ENCODE measurements at regions of chr10 and their contacts with region 1.

Region 1: DNA sequence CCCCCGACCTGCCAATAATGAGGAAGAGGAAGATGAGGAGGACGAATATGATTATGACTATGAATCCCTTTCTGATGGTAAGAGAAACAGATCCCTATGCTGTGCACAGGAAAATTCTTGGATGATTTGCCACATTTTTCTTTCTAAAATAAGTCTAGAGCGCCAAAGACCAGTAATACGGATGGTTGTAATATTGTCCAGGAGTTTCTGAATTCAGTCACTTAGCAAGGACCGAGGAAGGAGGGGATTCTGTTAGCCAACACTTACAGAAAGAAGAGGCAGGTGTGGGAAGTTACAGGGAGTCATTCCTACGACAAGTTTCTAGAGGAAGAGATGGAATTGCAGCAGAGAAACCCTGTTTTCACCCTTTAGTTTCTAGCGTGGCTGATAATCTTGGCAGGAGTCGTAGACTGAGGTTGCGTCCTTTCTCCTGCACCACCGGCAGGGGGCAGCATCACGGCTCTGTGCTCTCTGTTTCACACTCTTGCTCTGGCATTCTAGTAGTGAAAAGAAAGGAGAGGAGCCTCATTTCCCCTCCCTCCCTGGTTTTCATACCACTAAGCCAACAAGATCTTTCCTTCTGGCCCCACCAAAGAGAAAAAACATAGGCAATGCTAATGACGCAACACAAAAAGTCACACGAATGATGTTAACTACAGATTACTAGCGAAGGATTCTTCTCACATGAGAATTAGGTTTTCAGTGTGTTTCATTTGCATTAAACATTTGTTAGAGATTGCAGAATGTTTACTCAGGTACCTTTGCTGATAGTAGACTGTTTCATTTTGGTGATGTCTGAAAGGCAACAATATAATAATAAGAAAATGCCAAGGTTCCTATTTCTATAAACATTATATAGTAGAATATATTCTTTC is 82.7 kb downstream of the NOC3L start:
- DNase-seq: peak; percentile 37
- H3K4me3 ChIP-seq: no peak overlapping the region
- H3K27ac ChIP-seq: no peak overlapping the region
- H3K4me1 ChIP-seq: peaks cover 7% of the 10 kb centered on the region
- H3K27me3 ChIP-seq: no peaks in the 10 kb centered on the region
- CTCF ChIP-seq: peak; percentile 96

Region 2: GRCh38 chr10:94251098-94251497 is 29.0 kb before region 1 on chr10:
- CTCF ChIA-PET with region 1: no interaction called
- dilution Hi-C with region 1: no loop called
- in situ Hi-C with region 1: no loop called
- intact Hi-C with region 1: no loop called
- DNase-seq: no peak
- H3K4me3 ChIP-seq: no peak overlapping the region
- H3K27ac ChIP-seq: no peak overlapping the region
- H3K4me1 ChIP-seq: no peaks in the 10 kb centered on the region
- H3K27me3 ChIP-seq: no peaks in the 10 kb centered on the region
- CTCF ChIP-seq: no peak

Region 3: DNA sequence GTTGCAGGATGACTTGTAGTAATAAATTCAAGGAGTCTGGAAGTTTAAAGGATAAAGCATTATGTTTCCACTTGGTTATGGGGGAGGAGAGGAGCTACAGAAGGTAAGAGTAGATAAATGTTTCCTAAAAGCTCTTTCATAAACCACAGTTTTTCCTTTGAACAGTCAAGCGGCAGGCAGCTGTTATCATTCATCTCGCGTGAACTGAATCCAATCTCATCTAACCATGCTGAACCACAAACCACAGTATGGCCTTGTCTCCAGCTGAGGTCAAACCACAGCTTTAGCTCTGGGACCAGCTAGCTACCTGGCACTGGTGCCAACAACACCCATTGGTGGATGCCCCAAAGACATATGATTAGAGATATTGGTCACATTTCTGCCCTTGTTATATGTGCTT is 19.3 kb after region 1 on chr10:
- CTCF ChIA-PET with region 1: no interaction called
- dilution Hi-C with region 1: no loop called
- in situ Hi-C with region 1: no loop called
- intact Hi-C with region 1: no loop called
- DNase-seq: peak; percentile 71
- H3K4me3 ChIP-seq: no peak overlapping the region
- H3K27ac ChIP-seq: no peak overlapping the region
- H3K4me1 ChIP-seq: no peaks in the 10 kb centered on the region
- H3K27me3 ChIP-seq: peaks cover 12% of the 10 kb centered on the region
- CTCF ChIP-seq: no peak

Region 4: GRCh38 chr10:94320285-94320914 is 40.3 kb after region 1 on chr10:
- CTCF ChIA-PET with region 1: no interaction called
- dilution Hi-C with region 1: no loop called
- in situ Hi-C with region 1: no loop called
- intact Hi-C with region 1: loop called (anchors 1 kb)
- DNase-seq: peak; percentile 37
- H3K4me3 ChIP-seq: no peak overlapping the region
- H3K27ac ChIP-seq: no peak overlapping the region
- H3K4me1 ChIP-seq: no peaks in the 10 kb centered on the region
- H3K27me3 ChIP-seq: no peaks in the 10 kb centered on the region
- CTCF ChIP-seq: peak; percentile 73 to 79

Region 5: DNA sequence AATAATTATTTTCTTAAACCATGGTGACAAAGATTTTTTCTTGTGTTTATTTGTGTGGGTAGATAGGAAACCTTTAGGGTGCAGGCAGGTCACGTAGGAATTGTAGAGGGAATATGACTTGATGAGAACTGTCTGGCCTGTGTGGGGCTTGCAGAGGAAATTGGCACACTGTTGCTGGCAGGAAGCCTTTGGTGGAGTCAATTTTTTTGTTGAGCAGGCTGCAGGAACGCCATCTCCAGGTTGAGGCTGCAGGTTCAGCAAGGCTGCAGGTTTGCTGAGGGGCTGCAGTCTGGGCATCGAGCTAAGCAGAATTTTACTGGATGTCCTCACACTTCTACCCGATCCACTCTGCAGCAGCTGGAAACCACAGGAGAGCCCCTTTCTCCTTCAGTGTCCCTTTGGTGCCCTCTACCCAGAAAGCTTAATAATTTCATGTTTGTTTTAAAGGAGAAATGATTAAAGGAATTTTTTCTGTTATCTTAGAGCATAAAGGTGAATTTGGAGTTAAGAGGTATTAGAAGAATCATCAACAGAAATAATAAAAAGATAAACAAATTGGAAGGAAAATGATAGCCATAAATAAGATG is 159.3 kb after region 1 on chr10:
- CTCF ChIA-PET with region 1: interaction called, 4 read pairs
- dilution Hi-C with region 1: no loop called
- in situ Hi-C with region 1: no loop called
- intact Hi-C with region 1: loop called (anchors 1 kb)
- DNase-seq: peak; percentile 3
- H3K4me3 ChIP-seq: no peak overlapping the region
- H3K27ac ChIP-seq: no peak overlapping the region
- H3K4me1 ChIP-seq: no peaks in the 10 kb centered on the region
- H3K27me3 ChIP-seq: no peaks in the 10 kb centered on the region
- CTCF ChIP-seq: peak in 1 of 2 donors; percentile 7

Measured in mammary epithelial cell (primary cell).